ENCODE measurements at regions of chr10 and their contacts with region 1.

Region 1: GRCh38 chr10:103685880-103686669 is 169.3 kb downstream of the SH3PXD2A start:
- DNase-seq: peak; percentile 64
- ATAC-seq: peak; percentile 97
- H3K4me3 ChIP-seq: no peak overlapping the region
- H3K27ac ChIP-seq: peak overlapping the region; percentile 8; the same call in 1 of the 2 replicates
- H3K4me1 ChIP-seq: peaks cover 5% of the 10 kb centered on the region; the same call in 1 of the 2 replicates
- H3K27me3 ChIP-seq: no peaks in the 10 kb centered on the region
- CTCF ChIP-seq: peak; percentile 96
- POLR2A ChIP-seq: no peak
- RAD21 ChIP-seq: peak; percentile 96

Region 2: DNA sequence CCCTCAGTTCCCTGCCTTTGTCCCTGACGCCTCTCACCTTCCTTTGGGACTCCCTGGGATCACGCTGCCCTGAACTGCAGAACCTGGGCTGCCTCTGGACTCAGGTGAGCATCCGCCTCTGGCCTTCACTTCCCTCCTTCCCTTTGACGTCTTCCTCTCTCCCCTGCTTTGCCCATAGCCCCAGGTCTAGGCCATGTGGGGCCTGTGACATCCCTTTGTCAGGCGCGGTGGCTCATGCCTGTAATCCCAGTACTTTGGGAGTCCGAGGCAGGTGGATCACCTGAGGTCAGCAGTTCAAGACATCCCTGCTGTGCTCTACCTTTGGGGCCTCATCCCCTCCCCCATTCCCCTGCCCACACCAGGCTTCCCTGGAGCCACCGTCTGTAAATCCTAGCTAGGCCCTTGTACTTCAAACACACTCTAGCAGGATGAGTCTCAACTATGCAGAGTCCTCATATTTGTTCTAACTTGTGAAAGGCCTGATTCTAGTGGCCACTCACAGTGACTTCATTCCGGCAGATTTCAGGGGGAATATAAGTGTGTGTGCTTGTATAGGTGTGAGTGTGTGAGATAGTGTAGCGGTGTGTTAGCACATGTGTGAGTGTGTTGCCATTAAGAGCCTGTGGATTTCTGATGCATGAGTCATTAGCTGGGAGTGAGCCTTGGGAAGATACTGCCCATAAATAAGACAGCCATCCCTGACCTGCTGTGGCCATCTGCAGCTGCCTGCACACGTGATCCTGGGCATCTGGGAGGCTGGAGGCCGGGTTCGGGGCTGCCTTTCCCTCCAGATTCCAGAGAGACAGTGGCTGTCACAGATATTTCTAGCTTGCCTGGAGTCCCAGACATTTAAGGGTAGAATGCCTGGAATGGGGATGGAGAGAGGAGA is 194.3 kb before region 1 on chr10:
- CTCF ChIA-PET with region 1: no interaction called
- POLR2A ChIA-PET with region 1: no interaction called
- dilution Hi-C with region 1: no loop called
- in situ Hi-C with region 1: loop called (anchors 10 kb)
- intact Hi-C with region 1: no loop called
- DNase-seq: peak; percentile 98
- ATAC-seq: peak; percentile 81
- H3K4me3 ChIP-seq: no peak overlapping the region
- H3K27ac ChIP-seq: no peak overlapping the region
- H3K4me1 ChIP-seq: peaks cover 19% of the 10 kb centered on the region
- H3K27me3 ChIP-seq: peaks cover 55% of the 10 kb centered on the region
- CTCF ChIP-seq: no peak
- POLR2A ChIP-seq: no peak
- RAD21 ChIP-seq: no peak

Region 3: DNA sequence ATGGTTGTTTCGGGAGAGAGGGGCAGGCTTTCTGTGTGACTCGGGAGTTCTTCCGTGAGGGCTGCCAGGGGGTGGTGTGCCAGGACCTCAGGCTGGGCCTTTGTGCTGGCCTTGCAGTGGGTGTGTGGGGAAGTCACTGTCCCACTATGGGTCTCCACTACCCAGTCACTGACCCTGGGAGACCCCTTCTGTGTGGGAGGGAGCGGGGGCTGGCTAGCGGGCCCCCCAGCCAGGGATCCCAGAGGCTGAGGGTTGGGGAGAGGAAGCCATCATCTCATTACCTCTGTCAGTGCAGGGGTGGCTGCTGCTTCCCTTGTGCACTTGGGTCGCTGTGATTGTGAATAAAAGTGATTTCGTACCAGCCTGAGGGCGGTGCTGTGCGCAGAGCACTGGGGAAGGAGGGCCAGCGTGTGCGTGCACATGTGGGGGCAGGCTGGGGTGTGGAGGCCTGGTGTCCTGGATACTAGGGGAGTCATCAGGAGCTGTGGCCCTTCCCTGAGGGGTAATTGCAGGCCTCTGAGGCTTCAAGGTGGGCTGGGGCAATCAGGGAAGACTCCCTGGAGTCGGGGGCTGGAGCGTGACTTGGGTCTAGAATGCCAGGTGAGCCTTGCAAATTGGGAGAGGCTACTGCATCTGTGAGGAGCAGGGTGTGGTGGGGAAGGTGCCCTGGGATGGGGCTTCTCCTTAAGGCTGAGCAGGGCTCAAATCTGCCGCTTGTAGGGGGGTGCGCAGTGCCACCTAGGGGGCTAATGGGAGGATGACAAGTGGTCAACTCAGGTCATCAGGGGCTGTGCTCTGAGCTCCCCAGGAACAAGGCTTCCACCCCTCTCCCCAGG is 93.7 kb before region 1 on chr10:
- CTCF ChIA-PET with region 1: interaction called, 10 read pairs
- POLR2A ChIA-PET with region 1: no interaction called
- dilution Hi-C with region 1: no loop called
- in situ Hi-C with region 1: no loop called
- intact Hi-C with region 1: no loop called
- DNase-seq: peak; percentile 38
- ATAC-seq: peak; percentile 79
- H3K4me3 ChIP-seq: no peak overlapping the region
- H3K27ac ChIP-seq: no peak overlapping the region
- H3K4me1 ChIP-seq: no peaks in the 10 kb centered on the region; the same call in 1 of the 2 replicates
- H3K27me3 ChIP-seq: no peaks in the 10 kb centered on the region; the same call in 1 of the 2 replicates
- CTCF ChIP-seq: peak; percentile 63
- POLR2A ChIP-seq: no peak
- RAD21 ChIP-seq: peak; percentile 61

Region 4: DNA sequence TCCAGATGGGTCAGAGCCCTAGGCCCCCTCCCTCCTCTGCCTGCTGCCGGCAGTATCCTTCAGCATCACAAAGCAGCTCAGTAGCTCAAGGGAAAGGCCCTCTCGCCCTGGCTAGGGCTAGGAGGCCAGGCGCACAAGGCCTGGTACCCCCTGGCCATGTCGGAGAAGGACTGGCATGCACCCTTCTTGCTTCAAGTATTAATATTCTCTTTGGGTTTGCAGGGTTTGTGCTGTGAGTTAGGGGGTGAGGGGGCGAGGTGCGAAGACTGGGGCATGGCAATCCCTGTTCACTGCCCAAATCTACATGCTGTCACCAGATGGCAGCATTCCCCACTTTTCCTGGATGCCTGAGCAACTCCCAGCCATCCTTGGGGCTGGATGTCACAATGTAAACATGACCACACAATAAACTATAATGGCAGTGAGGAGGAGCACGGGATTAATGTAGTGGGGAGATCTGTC is 87.4 kb before region 1 on chr10:
- CTCF ChIA-PET with region 1: interaction called, 17 read pairs
- POLR2A ChIA-PET with region 1: no interaction called
- dilution Hi-C with region 1: no loop called
- in situ Hi-C with region 1: no loop called
- intact Hi-C with region 1: loop called (anchors 1 kb)
- DNase-seq: peak; percentile 82
- ATAC-seq: peak; percentile 83
- H3K4me3 ChIP-seq: no peak overlapping the region
- H3K27ac ChIP-seq: no peak overlapping the region
- H3K4me1 ChIP-seq: no peaks in the 10 kb centered on the region; the same call in 1 of the 2 replicates
- H3K27me3 ChIP-seq: no peaks in the 10 kb centered on the region
- CTCF ChIP-seq: peak; percentile 88
- POLR2A ChIP-seq: 0 out of 2 replicates have a peak, but pooled peaks have one; percentile 29
- RAD21 ChIP-seq: peak; percentile 88

Region 5: DNA sequence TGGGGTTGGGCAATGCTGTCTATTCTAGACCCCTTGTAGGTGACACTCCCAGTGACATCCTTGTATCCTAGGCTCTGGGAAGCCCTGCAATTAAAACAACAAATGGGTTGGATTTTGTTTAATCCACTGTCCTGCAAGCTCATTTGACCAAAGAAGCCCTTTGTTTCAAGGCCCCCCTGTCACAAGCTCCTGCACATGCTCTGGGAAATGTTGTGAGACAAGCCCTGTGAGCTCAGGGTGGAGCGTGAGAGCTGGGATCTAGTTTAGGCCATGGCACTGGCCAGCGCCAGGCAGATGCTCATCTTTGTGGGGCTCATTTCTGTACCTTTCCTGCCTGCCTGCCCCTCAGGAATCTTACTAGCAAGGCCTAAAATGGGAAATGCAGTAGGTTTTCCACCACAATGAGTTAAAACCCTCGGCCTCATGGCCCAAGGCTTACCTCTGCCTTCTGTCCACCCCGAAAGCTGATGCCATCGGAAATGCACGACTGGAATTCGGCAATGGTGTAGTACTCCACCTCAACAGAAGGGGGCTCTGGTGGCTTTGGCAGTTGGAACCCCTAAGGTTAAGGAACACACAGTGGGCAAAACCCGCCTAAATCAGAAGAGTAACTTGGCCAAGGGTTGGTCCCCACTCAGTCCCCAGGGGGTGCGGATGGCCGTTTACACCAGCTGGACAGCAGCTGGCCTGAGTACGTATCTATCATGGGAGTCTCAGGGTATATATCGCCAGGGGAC is 80.5 kb before region 1 on chr10:
- CTCF ChIA-PET with region 1: interaction called, 19 read pairs
- POLR2A ChIA-PET with region 1: no interaction called
- dilution Hi-C with region 1: no loop called
- in situ Hi-C with region 1: loop called (anchors 5 kb)
- intact Hi-C with region 1: no loop called
- DNase-seq: peak; percentile 43
- ATAC-seq: peak; percentile 72
- H3K4me3 ChIP-seq: no peak overlapping the region
- H3K27ac ChIP-seq: no peak overlapping the region
- H3K4me1 ChIP-seq: no peaks in the 10 kb centered on the region
- H3K27me3 ChIP-seq: no peaks in the 10 kb centered on the region
- CTCF ChIP-seq: peak; percentile 65
- POLR2A ChIP-seq: no peak
- RAD21 ChIP-seq: peak; percentile 67

Region 6: DNA sequence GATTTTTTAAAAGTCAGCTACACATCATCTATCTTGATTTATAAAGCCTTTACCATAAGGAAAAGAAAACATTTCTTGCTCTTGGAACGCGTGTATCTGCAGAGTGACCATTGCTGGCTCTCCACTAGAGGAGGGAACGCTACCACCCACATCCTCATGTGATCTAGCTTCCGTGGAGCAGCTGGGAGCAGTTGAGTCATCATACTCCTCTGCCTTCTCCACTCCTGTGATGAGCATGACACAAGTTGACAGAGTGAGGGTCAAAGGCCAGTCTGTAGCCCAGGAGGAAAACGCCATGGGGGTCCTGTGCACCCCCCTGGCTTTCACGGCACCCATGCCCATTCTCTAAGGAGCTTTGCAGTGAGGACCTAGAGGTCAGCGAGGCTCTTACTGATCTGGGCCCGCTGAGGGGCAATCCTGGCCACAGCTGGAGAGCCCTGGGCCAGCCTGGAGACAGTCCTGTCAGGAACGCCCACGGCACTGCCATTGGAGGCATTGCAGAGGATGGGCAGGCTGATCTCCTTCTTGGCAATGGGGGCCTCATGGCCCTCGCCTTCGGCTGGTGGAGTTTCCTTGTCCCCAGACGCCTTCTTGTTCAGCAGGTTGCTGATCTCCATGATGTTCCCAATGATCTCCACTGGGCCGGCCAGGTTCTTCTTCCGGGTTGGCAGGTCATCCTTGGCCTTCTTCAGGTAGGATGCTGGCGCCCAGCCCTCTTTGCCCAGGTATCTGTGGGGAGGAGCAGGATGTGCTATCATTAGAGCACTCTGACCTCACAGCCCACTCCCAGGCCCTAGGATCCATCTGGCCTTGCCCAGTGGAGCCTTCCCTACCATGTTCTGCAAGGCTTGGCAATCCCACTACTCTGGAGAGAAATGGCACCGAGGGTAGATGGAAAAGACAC is 73.4 kb before region 1 on chr10:
- CTCF ChIA-PET with region 1: interaction called, 10 read pairs
- POLR2A ChIA-PET with region 1: no interaction called
- dilution Hi-C with region 1: no loop called
- in situ Hi-C with region 1: loop called (anchors 5 kb)
- intact Hi-C with region 1: no loop called
- DNase-seq: peak; percentile 91
- ATAC-seq: peak; percentile 87
- H3K4me3 ChIP-seq: no peak overlapping the region
- H3K27ac ChIP-seq: no peak overlapping the region; the same call in 1 of the 2 replicates
- H3K4me1 ChIP-seq: peaks cover 28% of the 10 kb centered on the region
- H3K27me3 ChIP-seq: no peaks in the 10 kb centered on the region
- CTCF ChIP-seq: peak; percentile 17; the same call in 1 of the 2 replicates
- POLR2A ChIP-seq: no peak
- RAD21 ChIP-seq: no peak

Region 7: GRCh38 chr10:103696411-103697145 is 10.5 kb after region 1 on chr10:
- CTCF ChIA-PET with region 1: interaction called, 11 read pairs
- POLR2A ChIA-PET with region 1: no interaction called
- dilution Hi-C with region 1: no loop called
- in situ Hi-C with region 1: no loop called
- intact Hi-C with region 1: no loop called
- DNase-seq: peak; percentile 92
- ATAC-seq: peak; percentile 91
- H3K4me3 ChIP-seq: no peak overlapping the region
- H3K27ac ChIP-seq: peak overlapping the region; percentile 31; the same call in 1 of the 2 replicates
- H3K4me1 ChIP-seq: peaks cover 21% of the 10 kb centered on the region
- H3K27me3 ChIP-seq: no peaks in the 10 kb centered on the region; the same call in 1 of the 2 replicates
- CTCF ChIP-seq: peak; percentile 53
- POLR2A ChIP-seq: 0 out of 2 replicates have a peak, but pooled peaks have one; percentile 28
- RAD21 ChIP-seq: peak; percentile 18; the same call in 1 of the 2 replicates